ENCODE measurements at regions of chr5 and their contacts with region 1.

Region 1: GRCh38 chr5:87400305-87400899 is 12.3 kb downstream of the CCNH start:
- DNase-seq: no peak
- H3K4me3 ChIP-seq: no peak overlapping the region
- H3K27me3 ChIP-seq: no peaks in the 10 kb centered on the region
- CTCF ChIP-seq: peak; percentile 51

Region 2: GRCh38 chr5:86968301-86968753 is 432.1 kb before region 1 on chr5:
- CTCF ChIA-PET with region 1: no interaction called
- POLR2A ChIA-PET with region 1: no interaction called
- DNase-seq: peak; percentile 49
- H3K4me3 ChIP-seq: no peak overlapping the region
- H3K27me3 ChIP-seq: no peaks in the 10 kb centered on the region
- CTCF ChIP-seq: peak; percentile 26; the same call in 1 of the 2 replicates

Region 3: GRCh38 chr5:87069974-87070624 is 330.3 kb before region 1 on chr5:
- CTCF ChIA-PET with region 1: interaction called, 31 read pairs
- POLR2A ChIA-PET with region 1: interaction called, 4 read pairs
- DNase-seq: peak; percentile 29
- H3K4me3 ChIP-seq: no peak overlapping the region
- H3K27me3 ChIP-seq: no peaks in the 10 kb centered on the region
- CTCF ChIP-seq: peak; percentile 68

Region 4: GRCh38 chr5:87421307-87421706 is 20.9 kb after region 1 on chr5:
- CTCF ChIA-PET with region 1: no interaction called
- POLR2A ChIA-PET with region 1: no interaction called
- DNase-seq: no peak
- H3K4me3 ChIP-seq: no peak overlapping the region
- H3K27me3 ChIP-seq: no peaks in the 10 kb centered on the region; the same call in 1 of the 2 replicates
- CTCF ChIP-seq: no peak